ENCODE measurements at regions of chr10 and their contacts with region 1.

Region 1: GRCh38 chr10:119416855-119417254 is 125.7 kb downstream of the RGS10 start:
- DNase-seq: peak; percentile 55 to 84 (median 62)
- ATAC-seq: peak; percentile 86
- H3K4me3 ChIP-seq: no peak overlapping the region
- H3K4me3 Mint-ChIP-seq: no peak overlapping the region
- H3K27ac ChIP-seq: no peak overlapping the region
- H3K27ac Mint-ChIP-seq: no peak overlapping the region
- H3K4me1 ChIP-seq: no peaks in the 10 kb centered on the region
- H3K4me1 Mint-ChIP-seq: no peaks in the 10 kb centered on the region
- H3K27me3 ChIP-seq: no peaks in the 10 kb centered on the region
- H3K27me3 Mint-ChIP-seq: no peaks in the 10 kb centered on the region
- CTCF ChIP-seq: peak; percentile 63

Region 2: GRCh38 chr10:119139464-119140067 is 277.3 kb before region 1 on chr10:
- CTCF ChIA-PET with region 1: no interaction called
- POLR2A ChIA-PET with region 1: no interaction called
- intact Hi-C with region 1: loop called in 1 of 2 experiments (anchors 5 kb)
- DNase-seq: peak; percentile 23 to 72 (median 46)
- ATAC-seq: peak; percentile 88
- H3K4me3 ChIP-seq: no peak overlapping the region
- H3K4me3 Mint-ChIP-seq: no peak overlapping the region
- H3K27ac ChIP-seq: peak overlapping the region in 1 of 2 donors; percentile 11
- H3K27ac Mint-ChIP-seq: peak overlapping the region; percentile 1
- H3K4me1 ChIP-seq: peaks cover 7% of the 10 kb centered on the region
- H3K4me1 Mint-ChIP-seq: peaks cover 7% of the 10 kb centered on the region
- H3K27me3 ChIP-seq: no peaks in the 10 kb centered on the region
- H3K27me3 Mint-ChIP-seq: no peaks in the 10 kb centered on the region
- CTCF ChIP-seq: peak; percentile 48

Region 3: GRCh38 chr10:119199231-119199992 is 217.4 kb before region 1 on chr10:
- CTCF ChIA-PET with region 1: interaction called, 12 read pairs
- POLR2A ChIA-PET with region 1: interaction called, 4 read pairs
- intact Hi-C with region 1: loop called (anchors 1 to 2 kb)
- DNase-seq: peak in 13 of 14 experiments; percentile 14 to 80 (median 45)
- ATAC-seq: peak; percentile 97
- H3K4me3 ChIP-seq: no peak overlapping the region
- H3K4me3 Mint-ChIP-seq: no peak overlapping the region
- H3K27ac ChIP-seq: no peak overlapping the region
- H3K27ac Mint-ChIP-seq: no peak overlapping the region
- H3K4me1 ChIP-seq: peaks cover 4% of the 10 kb centered on the region
- H3K4me1 Mint-ChIP-seq: peaks cover 5% of the 10 kb centered on the region
- H3K27me3 ChIP-seq: no peaks in the 10 kb centered on the region
- H3K27me3 Mint-ChIP-seq: no peaks in the 10 kb centered on the region
- CTCF ChIP-seq: peak; percentile 70

Region 4: GRCh38 chr10:119368991-119369869 is 47.6 kb before region 1 on chr10:
- CTCF ChIA-PET with region 1: no interaction called
- POLR2A ChIA-PET with region 1: no interaction called
- intact Hi-C with region 1: no loop called
- DNase-seq: no peak
- ATAC-seq: no peak
- H3K4me3 ChIP-seq: no peak overlapping the region
- H3K4me3 Mint-ChIP-seq: no peak overlapping the region
- H3K27ac ChIP-seq: no peak overlapping the region
- H3K27ac Mint-ChIP-seq: no peak overlapping the region
- H3K4me1 ChIP-seq: no peaks in the 10 kb centered on the region
- H3K4me1 Mint-ChIP-seq: peaks cover 16% of the 10 kb centered on the region
- H3K27me3 ChIP-seq: no peaks in the 10 kb centered on the region
- H3K27me3 Mint-ChIP-seq: no peaks in the 10 kb centered on the region
- CTCF ChIP-seq: no peak

Measured in CD4-positive, alpha-beta T cell (primary cell).